ENCODE measurements at regions of chr12 and their contacts with region 1.

Region 1: GRCh38 chr12:56333679-56334489 is at the start of gene PAN2:
- DNase-seq: peak; percentile 92 to 97
- ATAC-seq: peak; percentile 91 to 96 (median 96)
- H3K4me3 ChIP-seq: peak within 1 kb of the TSS; percentile 77
- H3K4me3 Mint-ChIP-seq: peak within 1 kb of the TSS; percentile 93
- H3K27ac ChIP-seq: peak within 1 kb of the TSS; percentile 99
- H3K27ac Mint-ChIP-seq: peak within 1 kb of the TSS; percentile 99
- H3K4me1 ChIP-seq: peaks cover 31% of the 10 kb centered on the region
- H3K4me1 Mint-ChIP-seq: peaks cover 19 to 34% of the 10 kb centered on the region in 2 donors
- H3K27me3 ChIP-seq: no peaks in the 10 kb centered on the region
- H3K27me3 Mint-ChIP-seq: no peaks in the 10 kb centered on the region
- CTCF ChIP-seq: peak; percentile 58
- total RNA-seq, gene PAN2: 86.2 to 117 (median 95.7) TPM

Region 2: DNA sequence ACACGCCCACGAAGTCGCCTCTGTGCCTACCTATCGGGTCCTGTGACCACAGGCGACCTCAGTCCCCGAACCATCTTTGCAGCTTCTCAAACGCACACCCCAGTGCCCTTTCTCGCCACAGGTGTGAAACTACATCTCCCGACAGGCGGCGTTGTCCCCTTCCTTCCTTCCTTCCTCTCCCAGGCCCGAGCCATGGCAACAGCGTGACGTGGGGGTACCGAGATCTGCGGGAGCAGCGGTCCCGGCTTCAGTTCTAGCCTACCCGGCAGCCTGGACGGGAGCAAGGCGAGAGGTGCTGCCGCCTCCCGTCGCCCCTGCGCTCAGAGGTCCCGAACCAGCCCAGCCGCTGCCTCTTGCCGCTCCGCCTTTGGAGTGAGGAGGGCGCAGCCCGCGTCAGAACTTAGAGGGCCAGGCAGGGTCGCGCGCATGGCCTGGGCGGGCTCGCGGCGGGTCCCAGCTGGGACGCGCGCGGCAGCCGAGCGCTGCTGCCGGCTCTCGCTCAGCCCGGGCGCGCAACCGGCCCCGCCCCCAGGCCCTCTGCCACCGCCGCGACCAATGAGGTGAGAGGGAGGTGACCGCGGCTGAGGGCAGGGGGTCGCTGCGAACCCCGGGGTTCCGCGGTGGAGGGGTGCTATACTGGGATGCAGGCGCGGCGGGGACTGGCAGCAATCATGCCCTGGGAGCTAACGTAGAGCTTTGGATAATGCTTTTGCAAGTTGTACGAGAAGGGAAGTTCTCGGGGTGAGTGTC is 67.0 kb before region 1 on chr12 and contains the start of gene COQ10A:
- intact Hi-C with region 1: loop called (anchors 2 kb)
- DNase-seq: peak; percentile 86 to 95
- ATAC-seq: peak; percentile 91 to 98 (median 91)
- H3K4me3 ChIP-seq: peak within 1 kb of the TSS; percentile 88
- H3K4me3 Mint-ChIP-seq: peak within 1 kb of the TSS; percentile 95
- H3K27ac ChIP-seq: peak within 1 kb of the TSS; percentile 99
- H3K27ac Mint-ChIP-seq: peak within 1 kb of the TSS; percentile 94 to 95
- H3K4me1 ChIP-seq: peaks cover 16% of the 10 kb centered on the region
- H3K4me1 Mint-ChIP-seq: peaks cover 9 to 20% of the 10 kb centered on the region in 2 donors
- H3K27me3 ChIP-seq: no peaks in the 10 kb centered on the region
- H3K27me3 Mint-ChIP-seq: no peaks in the 10 kb centered on the region
- CTCF ChIP-seq: peak; percentile 46
- total RNA-seq, gene COQ10A: 27.2 to 37.9 (median 30.2) TPM

Region 3: DNA sequence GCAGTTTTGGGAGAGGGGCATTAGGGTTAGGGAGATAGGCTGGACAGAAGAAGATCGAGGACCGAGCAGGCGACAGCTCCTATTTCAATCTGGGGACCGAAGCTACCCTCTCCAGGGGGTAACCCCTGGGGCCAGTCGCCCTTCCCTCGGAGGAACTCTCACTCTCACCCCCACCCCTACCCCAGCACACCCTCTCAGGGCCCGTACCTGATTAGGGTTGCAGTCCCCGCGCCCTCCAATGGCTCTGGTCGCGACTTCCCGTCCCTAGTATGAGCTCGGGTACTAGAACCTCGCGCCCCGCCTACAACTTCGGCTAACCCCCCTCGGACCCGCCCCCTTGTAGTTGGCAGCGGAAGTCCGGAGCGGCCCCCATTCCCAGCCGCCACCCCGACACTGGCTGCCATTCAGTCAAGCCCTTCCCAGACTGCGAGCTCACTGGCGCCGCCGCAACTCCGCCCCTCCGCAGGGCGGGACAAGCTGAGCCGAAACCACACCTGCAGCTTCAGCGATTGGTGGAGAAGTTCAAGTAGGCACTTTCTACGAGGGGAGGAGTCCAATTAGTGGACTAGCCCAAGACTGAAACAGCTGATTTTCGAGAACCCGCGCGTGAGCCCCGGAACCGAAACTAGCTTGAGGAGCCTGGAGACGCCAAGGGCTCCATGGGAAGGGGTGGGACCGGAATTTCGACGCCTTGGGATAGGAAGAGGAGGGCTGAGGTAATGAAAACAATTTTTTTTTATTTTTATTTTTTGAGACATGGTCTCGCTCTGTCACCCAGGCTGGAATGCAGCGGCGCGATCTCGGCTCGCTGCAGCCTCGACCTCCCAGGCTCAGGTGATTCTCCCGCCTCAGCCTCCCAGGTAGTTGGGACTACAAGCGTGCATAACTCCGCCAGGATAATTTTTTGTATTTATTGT is 26.2 kb after region 1 on chr12 and contains the start of gene STAT2:
- intact Hi-C with region 1: loop called (anchors 1 kb)
- DNase-seq: peak; percentile 98 to 99
- ATAC-seq: peak; percentile 93 to 98 (median 94)
- H3K4me3 ChIP-seq: peak within 1 kb of the TSS; percentile 80
- H3K4me3 Mint-ChIP-seq: peak within 1 kb of the TSS; percentile 97
- H3K27ac ChIP-seq: peak within 1 kb of the TSS; percentile 71
- H3K27ac Mint-ChIP-seq: peak within 1 kb of the TSS; percentile 88 to 91
- H3K4me1 ChIP-seq: peaks cover 17% of the 10 kb centered on the region
- H3K4me1 Mint-ChIP-seq: peaks cover 21 to 24% of the 10 kb centered on the region in 2 donors
- H3K27me3 ChIP-seq: no peaks in the 10 kb centered on the region
- H3K27me3 Mint-ChIP-seq: no peaks in the 10 kb centered on the region
- CTCF ChIP-seq: no peak
- total RNA-seq, gene STAT2: 140 to 157 (median 143) TPM

Region 4: GRCh38 chr12:56377310-56377988 is 43.6 kb after region 1 on chr12:
- intact Hi-C with region 1: no loop called
- DNase-seq: no peak
- ATAC-seq: no peak
- H3K4me3 ChIP-seq: no peak overlapping the region
- H3K4me3 Mint-ChIP-seq: no peak overlapping the region
- H3K27ac ChIP-seq: no peak overlapping the region
- H3K27ac Mint-ChIP-seq: no peak overlapping the region
- H3K4me1 ChIP-seq: peaks cover 7% of the 10 kb centered on the region
- H3K4me1 Mint-ChIP-seq: no peaks in the 10 kb centered on the region
- H3K27me3 ChIP-seq: no peaks in the 10 kb centered on the region
- H3K27me3 Mint-ChIP-seq: no peaks in the 10 kb centered on the region
- CTCF ChIP-seq: no peak

Region 5: GRCh38 chr12:56468216-56469006 is 134.5 kb after region 1 on chr12 and contains the start of gene SPRYD4:
- intact Hi-C with region 1: loop called (anchors 5 kb)
- DNase-seq: peak; percentile 93 to 97
- ATAC-seq: peak; percentile 91 to 98 (median 97)
- H3K4me3 ChIP-seq: peak within 1 kb of the TSS; percentile 80
- H3K4me3 Mint-ChIP-seq: peak within 1 kb of the TSS; percentile 95
- H3K27ac ChIP-seq: peak within 1 kb of the TSS; percentile 92
- H3K27ac Mint-ChIP-seq: peak within 1 kb of the TSS; percentile 94
- H3K4me1 ChIP-seq: peaks cover 20% of the 10 kb centered on the region
- H3K4me1 Mint-ChIP-seq: peaks cover 22 to 25% of the 10 kb centered on the region in 2 donors
- H3K27me3 ChIP-seq: no peaks in the 10 kb centered on the region
- H3K27me3 Mint-ChIP-seq: no peaks in the 10 kb centered on the region
- CTCF ChIP-seq: no peak
- total RNA-seq, gene SPRYD4: 5.6 to 6.2 (median 5.6) TPM